BJ (cell line): ENCODE measurements at regions of chr21 and their contacts with region 1.

Region 1: DNA sequence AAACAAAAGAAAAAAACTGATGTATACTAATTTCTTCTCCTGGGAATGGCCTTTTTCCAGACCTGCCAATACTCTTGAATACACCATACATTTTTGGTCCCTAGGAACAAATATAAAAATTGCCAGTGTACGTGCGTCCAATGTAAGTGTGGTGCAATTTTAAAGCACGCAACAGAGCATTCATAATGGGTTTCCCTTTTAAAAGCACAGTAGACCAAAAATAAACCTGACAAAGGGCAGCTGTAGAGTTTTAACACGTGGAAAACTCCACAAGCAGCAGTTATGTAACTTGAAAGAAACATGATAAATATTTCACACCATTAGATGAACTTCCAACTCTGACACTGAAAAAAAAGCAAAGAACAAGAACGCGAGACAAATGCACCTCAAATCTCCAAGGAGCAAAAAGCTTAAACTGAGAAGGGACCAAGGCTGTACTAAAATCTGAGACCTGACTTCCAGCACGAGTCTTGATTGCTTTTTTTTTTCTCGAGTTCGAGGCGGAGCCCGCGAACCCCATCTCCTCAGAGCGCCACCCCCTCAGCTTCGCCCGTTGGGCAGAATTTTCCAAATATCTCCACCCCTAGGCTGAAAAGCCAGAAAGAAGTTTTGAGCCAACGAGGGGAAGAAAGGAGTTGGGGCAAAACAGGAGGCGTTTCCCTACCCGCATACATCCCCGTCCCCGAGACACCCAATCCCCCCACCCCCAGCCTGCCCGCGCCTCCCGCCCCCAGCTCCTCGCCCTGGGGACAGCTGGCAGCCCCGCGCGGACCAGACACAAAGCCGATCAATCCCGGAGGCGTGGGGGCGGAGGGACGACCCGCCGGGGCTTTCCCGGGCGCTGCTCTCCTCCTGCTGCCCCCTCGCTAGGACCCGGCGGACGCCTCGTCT is at the start of gene JAM2:
- DNase-seq: no peak
- H3K4me3 ChIP-seq: peak within 1 kb of the TSS; percentile 43
- H3K27me3 ChIP-seq: peaks cover 9% of the 10 kb centered on the region
- CTCF ChIP-seq: no peak
- polyA plus RNA-seq, gene JAM2: 0.21 and 0.58 TPM in 2 replicates

Region 2: GRCh38 chr21:25626757-25627156 is 12.1 kb before region 1 on chr21:
- CTCF ChIA-PET with region 1: interaction called, 15 read pairs
- POLR2A ChIA-PET with region 1: no interaction called
- DNase-seq: no peak
- H3K4me3 ChIP-seq: no peak overlapping the region
- H3K27me3 ChIP-seq: peaks cover 2% of the 10 kb centered on the region
- CTCF ChIP-seq: no peak